Activated B cell treated with CpG ODN at 0.5 μM for 24 hours (primary cell): ENCODE measurements at regions of chr16 and their contacts with region 1.

Region 1: GRCh38 chr16:57244767-57245471 is at the start of gene ARL2BP:
- DNase-seq: peak; percentile 95
- ATAC-seq: peak; percentile 95
- H3K4me3 Mint-ChIP-seq: peak within 1 kb of the TSS; percentile 94
- H3K27ac Mint-ChIP-seq: peak within 1 kb of the TSS; percentile 91
- H3K4me1 Mint-ChIP-seq: peaks cover 40% of the 10 kb centered on the region
- H3K27me3 Mint-ChIP-seq: no peaks in the 10 kb centered on the region
- CTCF ChIP-seq: no peak
- total RNA-seq, gene ARL2BP: 27.1 and 29.4 TPM in 2 replicates

Region 2: GRCh38 chr16:56729735-56730662 is 514.9 kb before region 1 on chr16 and contains the start of gene NUP93:
- CTCF ChIA-PET with region 1: no interaction called
- POLR2A ChIA-PET with region 1: no interaction called
- intact Hi-C with region 1: loop called (anchors 5 kb)
- DNase-seq: peak; percentile 79
- ATAC-seq: peak; percentile 89
- H3K4me3 Mint-ChIP-seq: peak within 1 kb of the TSS; percentile 90
- H3K27ac Mint-ChIP-seq: peak within 1 kb of the TSS; percentile 84
- H3K4me1 Mint-ChIP-seq: peaks cover 20% of the 10 kb centered on the region
- H3K27me3 Mint-ChIP-seq: no peaks in the 10 kb centered on the region
- CTCF ChIP-seq: no peak
- total RNA-seq, gene NUP93: 104 and 111 TPM in 2 replicates

Region 3: DNA sequence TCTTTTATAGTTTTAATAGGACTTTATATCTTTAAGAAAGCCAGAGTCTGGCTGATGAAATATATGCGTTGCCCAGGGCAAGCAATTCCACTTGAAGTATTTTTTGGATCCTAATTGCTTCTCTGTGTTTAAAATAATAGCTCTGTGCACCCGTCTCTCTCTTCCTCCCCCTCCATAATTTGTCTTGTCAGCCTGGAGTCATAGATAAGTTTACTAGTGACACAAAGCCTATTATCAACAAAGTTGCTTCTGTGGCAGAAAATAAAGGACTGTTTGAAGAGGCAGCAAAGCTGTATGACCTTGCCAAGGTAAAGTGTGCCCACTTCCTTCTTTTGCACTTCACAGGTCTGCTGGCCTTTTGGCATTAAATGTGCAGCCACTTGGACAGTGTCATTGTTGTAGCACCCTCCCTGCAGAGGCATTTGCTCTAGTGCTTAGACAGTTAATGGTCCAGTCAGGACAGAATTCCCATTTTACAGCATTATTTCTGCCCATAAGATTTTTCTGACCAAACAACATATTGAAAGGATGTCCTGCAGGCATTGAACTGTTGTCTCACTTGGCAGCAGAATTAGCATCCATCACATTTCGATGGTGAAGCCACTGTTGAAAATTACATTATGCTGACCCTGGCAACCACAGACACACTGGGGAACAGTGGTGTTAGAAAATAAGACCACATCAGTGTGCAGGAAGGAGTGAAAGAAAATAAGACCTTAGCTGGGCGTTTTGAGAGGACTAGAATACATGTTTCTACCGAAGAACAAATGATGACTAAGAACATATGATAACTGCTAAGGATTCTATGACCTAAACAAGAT is 408.3 kb before region 1 on chr16:
- CTCF ChIA-PET with region 1: no interaction called
- POLR2A ChIA-PET with region 1: no interaction called
- intact Hi-C with region 1: no loop called
- DNase-seq: no peak
- ATAC-seq: no peak
- H3K4me3 Mint-ChIP-seq: no peak overlapping the region
- H3K27ac Mint-ChIP-seq: no peak overlapping the region
- H3K4me1 Mint-ChIP-seq: no peaks in the 10 kb centered on the region
- H3K27me3 Mint-ChIP-seq: no peaks in the 10 kb centered on the region
- CTCF ChIP-seq: no peak

Region 4: GRCh38 chr16:57091975-57092785 is 152.7 kb before region 1 on chr16 and contains the start of gene CPNE2:
- CTCF ChIA-PET with region 1: no interaction called
- POLR2A ChIA-PET with region 1: no interaction called
- intact Hi-C with region 1: loop called (anchors 2 kb)
- DNase-seq: peak; percentile 52
- ATAC-seq: peak; percentile 55
- H3K4me3 Mint-ChIP-seq: peak within 1 kb of the TSS; percentile 81
- H3K27ac Mint-ChIP-seq: no peak within 1 kb of the TSS
- H3K4me1 Mint-ChIP-seq: peaks cover 13% of the 10 kb centered on the region
- H3K27me3 Mint-ChIP-seq: peaks cover 24% of the 10 kb centered on the region
- CTCF ChIP-seq: no peak
- total RNA-seq, gene CPNE2: 7.4 and 8.3 TPM in 2 replicates

Region 5: GRCh38 chr16:57284208-57284951 is 39.5 kb after region 1 on chr16 and contains the start of gene PLLP:
- CTCF ChIA-PET with region 1: no interaction called
- POLR2A ChIA-PET with region 1: no interaction called
- intact Hi-C with region 1: loop called (anchors 2 kb)
- DNase-seq: peak; percentile 57
- ATAC-seq: peak; percentile 61
- H3K4me3 Mint-ChIP-seq: peak within 1 kb of the TSS; percentile 74
- H3K27ac Mint-ChIP-seq: no peak within 1 kb of the TSS
- H3K4me1 Mint-ChIP-seq: peaks cover 6% of the 10 kb centered on the region
- H3K27me3 Mint-ChIP-seq: peaks cover 21% of the 10 kb centered on the region
- CTCF ChIP-seq: no peak
- total RNA-seq, gene PLLP: not detected in 2 replicates